SK-N-SH (cell line): ENCODE measurements at regions of chr9 and their contacts with region 1.

Region 1: DNA sequence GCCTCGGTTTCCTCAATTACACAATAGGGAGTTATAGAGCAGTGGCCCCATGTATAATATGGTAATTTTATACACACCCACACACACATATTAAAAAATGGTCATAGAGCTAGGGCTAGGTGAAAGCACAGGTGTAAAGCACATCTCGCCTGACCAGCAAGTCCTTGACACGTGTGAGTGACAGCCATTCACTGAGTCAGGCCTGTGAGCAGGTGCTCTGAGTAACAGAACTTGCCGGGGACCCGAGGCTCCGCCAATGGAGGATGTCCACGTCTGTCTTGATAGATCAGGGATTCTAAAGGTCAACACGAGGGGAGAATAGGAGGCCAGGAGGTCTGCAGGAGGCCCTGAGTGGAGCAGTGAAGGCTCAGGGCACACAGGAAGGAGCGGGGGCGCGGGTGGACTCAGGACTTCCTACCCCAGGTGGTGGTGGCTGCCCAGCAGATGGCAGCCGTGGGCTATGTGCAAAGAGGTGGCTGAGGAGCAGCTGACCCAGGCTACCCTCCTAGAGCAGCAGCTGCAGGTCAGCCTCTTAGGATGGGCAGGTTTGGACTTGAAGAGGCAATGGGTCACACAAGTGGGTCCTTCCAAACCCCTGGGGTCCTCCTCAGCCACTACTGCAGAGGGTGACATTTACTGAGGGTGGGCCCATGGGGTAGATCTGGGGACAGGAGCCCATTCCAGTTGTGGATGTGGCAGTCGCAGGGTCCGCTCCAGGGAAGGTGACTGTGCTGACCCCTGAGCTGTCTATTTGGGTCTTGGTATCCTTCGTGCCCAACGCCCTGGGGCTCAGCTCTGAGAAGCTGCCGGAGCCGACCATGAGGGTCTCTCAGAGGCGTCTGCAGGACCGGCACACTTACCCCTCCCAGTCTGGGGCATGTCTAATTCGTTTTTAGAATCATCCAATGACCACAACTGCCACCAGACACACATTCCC is 45.9 kb downstream of the PRRT1B start:
- DNase-seq: peak; percentile 91
- H3K4me3 ChIP-seq: no peak overlapping the region; a peak in 1 of 4 replicates
- H3K27ac ChIP-seq: no peak overlapping the region
- H3K4me1 ChIP-seq: no peaks in the 10 kb centered on the region
- H3K27me3 ChIP-seq: no peaks in the 10 kb centered on the region
- CTCF ChIP-seq: peak; percentile 82
- EP300 ChIP-seq: no peak
- RAD21 ChIP-seq: peak; percentile 91

Region 2: DNA sequence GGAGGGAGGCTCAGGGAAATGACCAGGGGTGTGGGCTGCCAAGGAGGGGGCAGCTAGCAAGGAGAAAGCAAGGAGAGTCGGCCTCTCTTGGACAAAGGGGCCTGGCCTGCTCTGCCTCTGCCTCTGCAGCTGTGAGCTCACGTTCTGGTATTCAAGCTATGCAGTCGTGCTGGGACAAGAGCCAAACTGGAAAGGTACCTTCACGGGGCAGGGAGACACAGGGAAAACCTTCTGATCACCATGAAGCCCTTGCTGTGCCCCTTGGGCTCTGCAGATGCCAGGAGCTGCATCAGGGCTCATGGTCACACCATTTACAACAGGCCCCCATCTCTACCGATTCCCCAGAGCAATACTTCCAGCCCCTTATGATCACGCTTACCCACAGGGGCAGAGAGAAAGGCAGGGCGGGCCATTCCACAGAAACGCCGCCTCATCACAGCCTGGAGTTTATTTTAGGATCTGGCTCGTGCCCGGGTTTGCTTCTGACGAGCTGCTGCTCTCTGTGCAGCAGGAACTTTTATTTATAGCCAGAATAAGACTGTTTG is 17.4 kb after region 1 on chr9:
- CTCF ChIA-PET with region 1: interaction called, 14 read pairs
- POLR2A ChIA-PET with region 1: no interaction called
- DNase-seq: no peak
- H3K4me3 ChIP-seq: 0 out of 4 replicates have a peak overlapping the region, but pooled peaks of 1 of the 2 experiments have one; percentile 5
- H3K27ac ChIP-seq: peak overlapping the region; percentile 61 to 63; a peak in 3 of 4 replicates
- H3K4me1 ChIP-seq: peaks cover 13 to 16% of the 10 kb centered on the region in 2 experiments; a peak in 3 of 4 replicates
- H3K27me3 ChIP-seq: no peaks in the 10 kb centered on the region
- CTCF ChIP-seq: no peak
- EP300 ChIP-seq: no peak
- RAD21 ChIP-seq: no peak

Region 3: DNA sequence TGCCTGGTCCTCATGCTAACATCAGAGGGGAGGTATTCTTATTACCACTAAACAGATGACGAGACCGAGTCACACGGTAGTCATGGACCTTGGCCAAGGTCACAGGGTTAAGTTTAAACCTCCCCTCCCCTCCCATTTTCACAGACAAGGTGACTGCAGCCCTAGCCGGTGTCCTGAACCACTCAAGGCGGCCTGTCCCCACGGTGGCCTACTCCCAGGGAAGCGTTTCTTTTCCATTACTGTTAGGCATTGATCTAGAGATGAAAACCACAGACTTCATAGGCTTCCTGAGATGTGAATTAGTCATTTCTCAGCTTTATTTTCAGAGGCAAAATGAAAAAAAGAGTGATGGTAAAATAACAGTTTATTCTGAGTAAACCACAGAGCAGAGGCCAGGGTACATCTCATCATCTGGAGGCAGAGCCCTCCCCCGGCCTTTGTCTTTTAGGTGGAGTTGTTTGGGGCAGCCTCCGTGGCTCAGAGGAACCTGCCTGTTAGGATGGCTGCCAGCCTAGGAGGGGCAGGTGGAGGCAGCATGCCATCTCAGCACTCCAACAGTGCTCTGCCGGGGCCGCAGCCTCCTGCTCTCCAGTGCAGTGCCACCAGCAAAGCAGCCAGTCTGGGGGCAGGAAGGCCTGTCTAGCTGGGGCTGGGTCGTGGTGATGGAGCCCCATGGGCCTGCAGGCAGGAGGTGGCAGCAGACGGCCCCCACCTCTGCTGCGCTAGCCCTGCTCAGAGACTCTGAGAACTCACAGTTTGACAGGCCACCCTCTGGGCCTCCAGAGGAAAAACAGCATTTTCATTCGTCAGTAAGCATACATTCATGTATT is 77.5 kb after region 1 on chr9:
- CTCF ChIA-PET with region 1: no interaction called
- POLR2A ChIA-PET with region 1: no interaction called
- DNase-seq: peak; percentile 69
- H3K4me3 ChIP-seq: no peak overlapping the region
- H3K27ac ChIP-seq: peak overlapping the region; percentile 50 to 69
- H3K4me1 ChIP-seq: peaks cover 22 to 25% of the 10 kb centered on the region in 2 experiments
- H3K27me3 ChIP-seq: no peaks in the 10 kb centered on the region
- CTCF ChIP-seq: 0 out of 2 replicates have a peak, but pooled peaks have one; percentile 10
- EP300 ChIP-seq: 0 out of 4 replicates have a peak, but pooled peaks of 1 of the 2 experiments have one; percentile 7
- RAD21 ChIP-seq: no peak

Region 4: DNA sequence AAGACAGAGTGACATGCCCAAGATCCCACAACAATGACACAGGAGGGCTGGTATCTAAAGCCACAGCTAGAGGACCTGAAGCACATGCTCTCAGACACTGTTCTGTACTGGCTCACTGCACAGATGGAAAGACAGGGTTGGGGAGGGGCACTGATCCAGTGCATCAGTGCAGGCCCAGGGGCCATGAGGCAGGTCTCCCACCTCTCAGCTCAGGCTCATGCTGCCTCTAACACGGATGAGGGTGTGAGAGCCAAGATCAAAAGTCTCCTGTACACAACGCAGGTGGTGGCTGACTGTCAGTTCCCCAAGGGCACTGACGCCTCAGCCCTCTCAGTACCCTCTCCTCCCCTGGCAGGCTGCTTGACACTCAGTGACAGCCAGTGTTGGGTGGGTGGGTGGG is 137.8 kb after region 1 on chr9:
- CTCF ChIA-PET with region 1: interaction called, 11 read pairs
- POLR2A ChIA-PET with region 1: no interaction called
- DNase-seq: peak; percentile 51
- H3K4me3 ChIP-seq: no peak overlapping the region
- H3K27ac ChIP-seq: no peak overlapping the region
- H3K4me1 ChIP-seq: peaks cover 34% of the 10 kb centered on the region in 2 experiments
- H3K27me3 ChIP-seq: no peaks in the 10 kb centered on the region
- CTCF ChIP-seq: no peak
- EP300 ChIP-seq: no peak
- RAD21 ChIP-seq: no peak

Region 5: DNA sequence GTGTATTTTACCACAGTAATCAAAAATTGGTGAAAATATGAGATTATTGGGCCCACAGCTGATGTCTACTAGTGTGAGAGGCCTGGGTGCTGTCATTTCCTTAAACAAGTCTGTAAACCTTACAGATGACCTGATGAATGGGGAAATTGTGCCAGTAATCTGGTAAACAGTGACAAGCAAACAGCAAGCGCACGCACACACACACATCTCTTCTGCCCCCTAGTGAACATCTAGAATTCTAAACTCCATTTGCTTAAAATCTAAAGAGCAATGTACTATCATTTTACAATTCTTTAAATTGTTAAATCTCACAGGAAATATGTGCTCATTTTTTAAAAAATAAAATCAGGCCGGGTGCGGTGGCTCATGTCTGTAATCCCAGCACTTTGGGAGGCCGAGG is 156.2 kb after region 1 on chr9:
- CTCF ChIA-PET with region 1: interaction called, 55 read pairs
- POLR2A ChIA-PET with region 1: no interaction called
- DNase-seq: peak; percentile 52
- H3K4me3 ChIP-seq: peak overlapping the region in 1 of 2 experiments; percentile 47; a peak in 1 of 4 replicates
- H3K27ac ChIP-seq: no peak overlapping the region
- H3K4me1 ChIP-seq: no peaks in the 10 kb centered on the region
- H3K27me3 ChIP-seq: no peaks in the 10 kb centered on the region
- CTCF ChIP-seq: peak; percentile 75
- EP300 ChIP-seq: no peak
- RAD21 ChIP-seq: peak; percentile 85